ENCODE measurements at regions of chr18 and their contacts with region 1.

Region 1: DNA sequence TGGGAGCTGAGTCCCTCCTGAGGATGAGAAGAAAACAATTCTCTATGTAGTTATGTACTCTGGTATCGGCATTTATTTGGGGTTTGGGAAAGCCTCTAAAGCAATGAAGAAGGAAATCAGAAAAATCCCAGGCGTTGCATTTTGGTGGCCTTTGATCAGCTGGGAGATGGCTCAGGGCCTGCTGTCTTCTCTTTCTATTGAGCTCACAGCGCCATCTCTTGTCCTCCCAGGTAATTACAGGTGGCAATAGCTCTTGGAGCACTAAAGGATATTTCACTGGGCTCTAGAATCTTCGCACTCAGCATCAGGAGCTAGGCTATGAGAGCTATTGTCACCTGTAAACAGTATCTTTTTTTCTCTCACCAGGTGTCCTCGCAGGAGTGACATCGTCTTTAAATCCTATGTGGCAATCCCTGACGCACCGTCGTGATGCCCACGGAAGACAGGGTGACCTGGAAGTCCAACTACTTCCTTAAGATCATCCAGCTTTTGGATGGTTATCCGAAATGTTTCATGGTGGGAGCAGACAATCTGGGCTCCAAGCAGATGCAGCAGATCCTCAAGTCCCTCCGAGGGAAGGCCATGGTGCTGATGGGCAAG is 76.1 kb upstream of the PMAIP1 start:
- DNase-seq: no peak
- H3K4me3 ChIP-seq: no peak overlapping the region
- CTCF ChIP-seq: peak; percentile 79

Region 2: DNA sequence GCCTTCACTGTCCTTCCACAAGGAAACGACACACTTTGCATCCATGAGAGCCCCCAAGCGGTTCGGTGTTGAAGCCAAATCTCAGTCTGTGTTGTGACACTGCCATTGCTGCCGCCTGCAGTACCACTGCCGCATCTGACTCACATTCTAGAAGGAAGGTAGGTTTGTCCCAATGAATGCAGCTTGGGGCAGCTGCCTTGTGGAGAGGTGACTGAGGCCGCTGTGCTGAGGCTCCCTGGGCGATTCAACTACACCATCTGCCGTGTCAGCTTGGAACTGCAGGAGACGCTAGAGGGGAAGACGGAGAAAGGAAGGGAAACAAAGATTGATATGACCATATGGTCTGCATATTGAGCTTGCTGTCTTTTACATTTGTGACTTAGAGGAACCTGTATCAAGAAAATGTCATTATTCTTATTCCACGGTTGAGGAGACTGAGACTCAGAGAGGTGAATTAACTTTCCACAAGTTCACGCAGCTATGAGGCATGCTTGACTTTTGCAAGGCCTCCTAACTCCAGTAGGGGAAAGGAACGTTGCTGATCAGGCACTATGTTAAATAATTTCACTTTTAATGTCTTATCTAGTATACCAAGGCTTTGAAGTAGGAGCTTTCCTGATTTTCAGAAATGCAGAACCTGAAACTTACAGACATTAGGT is 421.1 kb before region 1 on chr18:
- CTCF ChIA-PET with region 1: interaction called, 13 read pairs
- POLR2A ChIA-PET with region 1: no interaction called
- DNase-seq: peak; percentile 17
- H3K4me3 ChIP-seq: no peak overlapping the region
- CTCF ChIP-seq: peak; percentile 97

Region 3: DNA sequence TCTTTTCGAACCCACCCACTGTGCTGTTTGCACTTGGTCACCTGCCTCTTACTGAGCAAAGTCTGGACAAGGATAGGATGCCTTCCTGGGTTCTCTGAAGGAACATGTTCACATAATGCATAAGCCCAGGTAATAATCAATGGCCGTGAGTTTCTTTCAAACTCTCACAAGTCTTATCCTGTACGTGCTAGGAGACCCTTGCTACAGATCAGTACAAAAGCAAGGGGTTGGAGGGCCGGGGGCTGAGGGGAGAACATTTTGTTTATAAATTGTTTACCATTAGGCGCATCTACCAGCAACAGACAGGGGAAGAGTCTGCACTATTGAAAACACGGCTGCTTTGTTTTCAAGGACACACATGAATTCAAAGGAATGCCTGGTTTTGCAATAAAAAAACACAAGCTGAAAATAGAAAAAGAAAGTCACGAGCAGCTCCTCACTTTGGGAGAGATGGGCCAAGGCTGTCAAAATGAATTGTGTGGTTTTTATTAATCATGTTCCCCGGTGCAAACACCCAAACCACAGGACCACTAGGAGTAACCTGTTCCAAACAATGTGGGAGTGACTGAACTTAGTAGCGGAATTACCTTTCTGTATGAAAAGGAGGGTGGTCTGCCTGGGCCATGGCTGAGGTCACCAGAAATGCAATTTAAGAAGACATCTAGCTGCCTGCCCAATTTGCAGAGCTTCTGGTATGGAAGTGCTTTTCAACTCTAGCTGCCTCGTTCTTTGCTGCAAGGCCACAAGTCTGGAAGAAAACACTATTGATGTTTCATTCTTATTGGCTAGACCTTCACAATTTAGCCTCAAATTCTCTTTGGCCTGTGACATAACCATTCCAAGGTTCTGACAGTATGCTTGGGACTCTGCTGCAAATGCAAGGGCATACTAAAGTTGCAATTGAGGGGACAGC is 200.0 kb before region 1 on chr18:
- CTCF ChIA-PET with region 1: interaction called, 51 read pairs
- POLR2A ChIA-PET with region 1: no interaction called
- DNase-seq: no peak
- H3K4me3 ChIP-seq: no peak overlapping the region; the same call in 1 of the 2 replicates
- CTCF ChIP-seq: no peak

Region 4: DNA sequence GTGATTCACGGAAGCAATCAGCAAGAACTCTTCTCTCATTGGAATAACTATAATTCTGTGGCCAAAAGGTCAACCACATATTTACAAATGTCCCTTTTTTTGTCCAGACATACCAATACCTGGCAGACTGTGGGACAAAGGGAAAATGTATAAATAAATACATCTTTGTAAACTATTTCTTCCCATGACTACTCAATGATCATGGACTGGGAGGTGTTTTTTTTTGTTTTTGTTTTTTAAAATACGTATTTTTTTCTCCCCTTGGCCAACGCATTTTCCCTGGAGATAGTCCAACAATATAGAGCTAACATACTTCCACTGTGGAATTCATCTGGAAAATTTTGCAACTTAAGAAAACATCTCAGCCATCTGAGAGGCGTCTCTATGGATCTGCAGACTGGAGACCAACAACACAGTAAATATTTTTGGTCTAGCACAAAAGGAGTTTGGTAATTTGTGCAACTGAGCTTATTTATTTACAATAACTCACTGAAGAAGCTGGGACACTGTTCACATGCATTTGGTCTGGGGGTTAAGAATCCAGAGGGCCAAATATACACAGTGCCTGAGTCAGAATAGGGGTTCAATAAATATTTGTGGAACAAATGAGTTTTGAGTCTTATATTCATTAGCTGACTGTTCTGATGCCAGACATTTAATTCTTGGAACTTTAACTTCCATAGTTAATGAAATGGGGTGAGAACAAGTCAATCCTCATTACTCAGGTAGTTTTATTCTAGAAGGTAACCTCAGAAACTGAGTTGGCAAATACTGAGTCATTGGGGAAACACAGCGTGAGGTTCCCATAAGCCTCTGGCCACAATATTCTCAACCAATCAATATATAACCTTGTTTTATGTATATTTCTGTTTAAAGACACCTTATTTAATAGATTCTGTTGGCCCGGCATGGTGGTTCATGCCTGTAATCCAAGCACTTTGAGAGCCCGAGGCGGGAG is 162.6 kb before region 1 on chr18:
- CTCF ChIA-PET with region 1: interaction called, 17 read pairs
- POLR2A ChIA-PET with region 1: no interaction called
- DNase-seq: peak; percentile 80
- H3K4me3 ChIP-seq: no peak overlapping the region
- CTCF ChIP-seq: no peak

Region 5: GRCh38 chr18:59697236-59697932 is 126.3 kb before region 1 on chr18 and contains the start of gene CCBE1:
- CTCF ChIA-PET with region 1: interaction called, 103 read pairs
- POLR2A ChIA-PET with region 1: interaction called, 9 read pairs
- DNase-seq: no peak
- H3K4me3 ChIP-seq: peak within 1 kb of the TSS; percentile 94
- CTCF ChIP-seq: peak; percentile 97

Region 6: GRCh38 chr18:59783138-59783537 is 40.6 kb before region 1 on chr18:
- CTCF ChIA-PET with region 1: interaction called, 83 read pairs
- POLR2A ChIA-PET with region 1: interaction called, 3 read pairs
- DNase-seq: no peak
- H3K4me3 ChIP-seq: no peak overlapping the region
- CTCF ChIP-seq: peak; percentile 46

Region 7: GRCh38 chr18:59837586-59837985 is 13.9 kb after region 1 on chr18:
- CTCF ChIA-PET with region 1: interaction called, 76 read pairs
- POLR2A ChIA-PET with region 1: no interaction called
- DNase-seq: no peak
- H3K4me3 ChIP-seq: no peak overlapping the region
- CTCF ChIP-seq: peak; percentile 79